Activated T-helper 1 cell treated with anti-CD3 and anti-CD28 coated beads, Interleukin-12 subunit alpha, Interleukin-12 subunit beta, Interleukin-2, Interleukin-4 antibody, amounts not matched to agents 30 ng/mL and 10 ng/mL and 1 ng/mL, durations not matched to agents 14 hours and 24 hours and 36 hours (primary cell): ENCODE measurements at regions of chr21 and their contacts with region 1.

Region 1: GRCh38 chr21:35198031-35198431 is 148.9 kb upstream of the RUNX1 start:
- DNase-seq: no peak
- H3K4me3 Mint-ChIP-seq: no peak overlapping the region
- H3K27ac Mint-ChIP-seq: no peak overlapping the region
- H3K4me1 Mint-ChIP-seq: peaks cover 19% of the 10 kb centered on the region
- H3K27me3 Mint-ChIP-seq: peaks cover 6% of the 10 kb centered on the region

Region 2: DNA sequence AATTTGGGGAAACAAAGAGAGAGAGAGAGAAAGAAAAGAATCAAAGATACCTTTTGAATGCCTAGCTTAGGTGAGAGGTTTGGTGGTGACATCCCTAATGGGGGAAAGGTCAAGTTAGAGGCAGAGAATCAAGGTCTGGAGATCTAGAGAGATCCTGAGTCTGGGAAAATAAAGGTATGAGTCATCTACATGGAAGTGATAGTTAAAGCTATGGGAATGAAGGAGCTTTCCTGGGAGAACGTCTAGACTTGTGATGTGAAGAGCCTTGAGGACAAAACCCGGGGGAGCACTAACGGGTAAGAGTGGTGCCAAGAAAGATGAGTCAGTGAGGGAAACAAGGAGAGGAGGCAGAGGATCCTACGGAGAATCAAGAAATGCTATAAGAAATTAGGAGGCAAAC is 38.1 kb before region 1 on chr21:
- intact Hi-C with region 1: no loop called
- DNase-seq: no peak
- H3K4me3 Mint-ChIP-seq: no peak overlapping the region
- H3K27ac Mint-ChIP-seq: no peak overlapping the region
- H3K4me1 Mint-ChIP-seq: peaks cover 6% of the 10 kb centered on the region
- H3K27me3 Mint-ChIP-seq: peaks cover 2% of the 10 kb centered on the region

Region 3: GRCh38 chr21:35217504-35218060 is 19.6 kb after region 1 on chr21:
- intact Hi-C with region 1: loop called (anchors 2 kb)
- DNase-seq: no peak
- H3K4me3 Mint-ChIP-seq: no peak overlapping the region
- H3K27ac Mint-ChIP-seq: peak overlapping the region; percentile 56
- H3K4me1 Mint-ChIP-seq: peaks cover 33% of the 10 kb centered on the region
- H3K27me3 Mint-ChIP-seq: peaks cover 5% of the 10 kb centered on the region

Region 4: GRCh38 chr21:35254006-35254764 is 56.2 kb after region 1 on chr21:
- intact Hi-C with region 1: loop called (anchors 5 kb)
- DNase-seq: no peak
- H3K4me3 Mint-ChIP-seq: no peak overlapping the region
- H3K27ac Mint-ChIP-seq: no peak overlapping the region
- H3K4me1 Mint-ChIP-seq: peaks cover 13% of the 10 kb centered on the region
- H3K27me3 Mint-ChIP-seq: no peaks in the 10 kb centered on the region

Region 5: GRCh38 chr21:35333831-35334618 is 136.0 kb after region 1 on chr21:
- intact Hi-C with region 1: no loop called
- DNase-seq: no peak
- H3K4me3 Mint-ChIP-seq: no peak overlapping the region
- H3K27ac Mint-ChIP-seq: no peak overlapping the region
- H3K4me1 Mint-ChIP-seq: peaks cover 40% of the 10 kb centered on the region
- H3K27me3 Mint-ChIP-seq: no peaks in the 10 kb centered on the region